Right ventricle myocardium superior (tissue), 1 donor: ENCODE measurements at regions of chr5 and their contacts with region 1.

Region 1: DNA sequence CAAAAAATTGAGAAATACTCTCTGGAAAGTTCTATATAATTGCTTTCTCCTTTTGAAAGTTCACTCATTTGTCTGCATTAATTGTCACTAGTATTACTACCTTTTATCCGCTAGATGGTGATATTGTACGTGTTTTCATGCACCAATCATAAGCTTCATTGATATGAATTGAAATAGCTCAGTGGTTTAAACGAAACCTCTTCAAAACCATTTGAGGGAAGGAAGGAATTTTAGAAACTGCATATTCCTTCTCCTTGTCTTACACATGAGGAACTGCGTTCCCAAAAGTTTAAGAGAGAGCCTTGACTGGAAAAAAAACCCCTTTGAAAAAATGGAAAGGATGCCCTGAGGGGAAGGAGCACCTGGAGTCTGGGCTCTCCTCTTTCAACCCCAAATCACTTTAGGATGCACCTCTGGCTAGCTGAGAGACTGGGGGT is 98.6 kb downstream of the YTHDC2 start:
- DNase-seq: no peak
- ATAC-seq: peak; percentile 64

Region 2: DNA sequence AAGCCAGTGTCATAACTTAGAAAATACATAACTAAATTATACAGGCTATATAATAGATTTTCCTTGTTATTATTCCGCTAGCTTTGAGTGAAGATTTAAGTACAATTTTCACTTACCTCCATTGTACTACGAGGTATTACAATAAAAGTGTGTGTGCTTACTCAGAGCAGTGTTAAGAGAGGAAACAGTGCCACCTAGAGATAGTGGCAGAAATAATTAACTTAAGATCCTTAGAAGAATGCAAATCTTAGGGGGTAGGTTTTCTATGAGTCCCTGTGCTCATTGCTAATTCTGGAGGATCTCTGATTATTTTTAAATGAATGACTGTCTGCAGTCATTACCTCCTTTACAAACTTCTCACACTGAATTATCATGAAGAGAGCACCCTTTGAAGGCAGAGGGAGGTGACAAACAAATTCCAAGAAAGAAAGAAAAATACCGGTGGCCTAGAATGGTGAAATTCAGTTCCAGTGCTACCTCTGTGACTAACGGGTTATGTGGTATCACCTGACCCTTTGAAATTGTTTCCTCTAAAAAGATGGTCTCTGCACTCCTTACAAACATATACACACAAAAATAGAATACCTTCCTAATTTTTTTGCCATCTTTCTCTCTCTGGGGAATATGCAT is 1177.8 kb after region 1 on chr5:
- intact Hi-C with region 1: loop called (anchors 10 kb)
- DNase-seq: no peak
- ATAC-seq: no peak

Region 3: GRCh38 chr5:115069087-115069968 is 1457.2 kb after region 1 on chr5:
- intact Hi-C with region 1: loop called (anchors 5 kb)
- DNase-seq: no peak
- ATAC-seq: no peak